Activated naive CD4-positive, alpha-beta T cell treated with anti-CD3 and anti-CD28 coated beads, Interleukin-2, amount 10 ng/mL, durations not matched to agents 7 days and 5 days (primary cell): ENCODE measurements at regions of chr9 and their contacts with region 1.

Region 1: GRCh38 chr9:129139993-129140396 is 28.8 kb downstream of the PTPA start:
- DNase-seq: peak; percentile 86
- H3K4me3 Mint-ChIP-seq: peak overlapping the region; percentile 74
- H3K27ac Mint-ChIP-seq: peak overlapping the region; percentile 96
- H3K4me1 Mint-ChIP-seq: peaks cover 39% of the 10 kb centered on the region
- H3K27me3 Mint-ChIP-seq: no peaks in the 10 kb centered on the region

Region 2: GRCh38 chr9:128552153-128552743 is 587.7 kb before region 1 on chr9 and contains the start of gene SPTAN1:
- CTCF ChIA-PET with region 1: no interaction called
- DNase-seq: peak; percentile 97
- H3K4me3 Mint-ChIP-seq: peak within 1 kb of the TSS; percentile 94
- H3K27ac Mint-ChIP-seq: peak within 1 kb of the TSS; percentile 97
- H3K4me1 Mint-ChIP-seq: peaks cover 26% of the 10 kb centered on the region
- H3K27me3 Mint-ChIP-seq: no peaks in the 10 kb centered on the region

Region 3: GRCh38 chr9:129093421-129094204 is 46.4 kb before region 1 on chr9:
- CTCF ChIA-PET with region 1: no interaction called
- DNase-seq: no peak
- H3K4me3 Mint-ChIP-seq: no peak overlapping the region
- H3K27ac Mint-ChIP-seq: no peak overlapping the region
- H3K4me1 Mint-ChIP-seq: no peaks in the 10 kb centered on the region
- H3K27me3 Mint-ChIP-seq: no peaks in the 10 kb centered on the region

Region 4: GRCh38 chr9:129156163-129156562 is 16.2 kb after region 1 on chr9:
- CTCF ChIA-PET with region 1: interaction called, 16 read pairs
- DNase-seq: no peak
- H3K4me3 Mint-ChIP-seq: no peak overlapping the region
- H3K27ac Mint-ChIP-seq: no peak overlapping the region
- H3K4me1 Mint-ChIP-seq: no peaks in the 10 kb centered on the region
- H3K27me3 Mint-ChIP-seq: no peaks in the 10 kb centered on the region

Region 5: DNA sequence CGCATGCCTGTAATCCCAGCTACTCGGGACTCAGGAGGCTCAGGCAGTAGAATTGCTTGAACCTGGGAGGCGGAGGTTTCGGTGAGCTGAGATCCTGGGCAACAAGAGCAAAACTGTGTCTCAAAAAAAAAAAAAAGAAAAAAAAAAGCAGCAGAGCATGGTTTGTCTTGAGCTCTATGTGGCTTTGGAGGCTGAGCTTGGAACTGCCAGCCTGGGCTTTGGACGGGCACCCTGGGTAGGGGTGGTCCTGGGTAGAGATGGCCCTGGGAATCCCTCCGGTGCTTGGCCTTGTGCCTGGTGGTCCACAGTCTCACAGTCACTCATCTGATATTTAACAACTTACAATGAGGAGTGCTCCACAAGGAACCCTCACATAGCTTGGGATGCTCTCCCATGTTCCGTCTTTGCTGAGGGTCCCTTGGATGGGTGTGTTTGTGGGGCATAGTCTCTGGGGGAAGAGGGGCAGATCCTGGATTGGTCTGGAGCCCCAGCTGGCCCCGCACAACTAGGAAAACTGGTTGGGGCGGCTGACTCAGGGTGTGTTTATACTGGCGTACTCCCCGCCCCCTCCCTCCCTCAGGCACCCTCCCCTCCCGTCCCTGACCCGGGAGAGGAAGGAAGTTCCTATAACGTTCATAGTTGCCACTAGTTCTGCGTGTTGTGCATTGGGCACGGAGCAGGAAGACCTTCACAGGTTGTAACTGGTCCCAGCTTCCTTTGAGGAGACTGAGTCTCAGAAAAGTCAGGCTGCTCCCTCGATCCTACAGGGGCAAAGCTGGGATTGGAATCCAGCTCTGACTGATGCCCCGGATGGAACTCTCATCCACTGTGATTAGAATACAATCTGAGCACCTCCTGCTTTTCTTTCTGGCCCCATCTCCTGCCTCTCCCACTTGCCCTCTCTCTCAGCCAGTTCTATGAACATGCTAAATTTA is 26.9 kb after region 1 on chr9:
- CTCF ChIA-PET with region 1: interaction called, 55 read pairs
- DNase-seq: peak; percentile 41
- H3K4me3 Mint-ChIP-seq: peak overlapping the region; percentile 35
- H3K27ac Mint-ChIP-seq: peak overlapping the region; percentile 64
- H3K4me1 Mint-ChIP-seq: peaks cover 35% of the 10 kb centered on the region
- H3K27me3 Mint-ChIP-seq: peaks cover 15% of the 10 kb centered on the region

Region 6: GRCh38 chr9:129174085-129174723 is 34.2 kb after region 1 on chr9:
- CTCF ChIA-PET with region 1: interaction called, 55 read pairs
- DNase-seq: peak; percentile 88
- H3K4me3 Mint-ChIP-seq: peak overlapping the region; percentile 71
- H3K27ac Mint-ChIP-seq: peak overlapping the region; percentile 42
- H3K4me1 Mint-ChIP-seq: peaks cover 32% of the 10 kb centered on the region
- H3K27me3 Mint-ChIP-seq: peaks cover 78% of the 10 kb centered on the region

Region 7: GRCh38 chr9:129610473-129611301 is 470.7 kb after region 1 on chr9:
- CTCF ChIA-PET with region 1: interaction called, 20 read pairs
- DNase-seq: peak; percentile 80
- H3K4me3 Mint-ChIP-seq: peak overlapping the region; percentile 64
- H3K27ac Mint-ChIP-seq: no peak overlapping the region
- H3K4me1 Mint-ChIP-seq: peaks cover 47% of the 10 kb centered on the region
- H3K27me3 Mint-ChIP-seq: peaks cover 53% of the 10 kb centered on the region